ENCODE measurements at regions of chr17 and their contacts with region 1.

Region 1: DNA sequence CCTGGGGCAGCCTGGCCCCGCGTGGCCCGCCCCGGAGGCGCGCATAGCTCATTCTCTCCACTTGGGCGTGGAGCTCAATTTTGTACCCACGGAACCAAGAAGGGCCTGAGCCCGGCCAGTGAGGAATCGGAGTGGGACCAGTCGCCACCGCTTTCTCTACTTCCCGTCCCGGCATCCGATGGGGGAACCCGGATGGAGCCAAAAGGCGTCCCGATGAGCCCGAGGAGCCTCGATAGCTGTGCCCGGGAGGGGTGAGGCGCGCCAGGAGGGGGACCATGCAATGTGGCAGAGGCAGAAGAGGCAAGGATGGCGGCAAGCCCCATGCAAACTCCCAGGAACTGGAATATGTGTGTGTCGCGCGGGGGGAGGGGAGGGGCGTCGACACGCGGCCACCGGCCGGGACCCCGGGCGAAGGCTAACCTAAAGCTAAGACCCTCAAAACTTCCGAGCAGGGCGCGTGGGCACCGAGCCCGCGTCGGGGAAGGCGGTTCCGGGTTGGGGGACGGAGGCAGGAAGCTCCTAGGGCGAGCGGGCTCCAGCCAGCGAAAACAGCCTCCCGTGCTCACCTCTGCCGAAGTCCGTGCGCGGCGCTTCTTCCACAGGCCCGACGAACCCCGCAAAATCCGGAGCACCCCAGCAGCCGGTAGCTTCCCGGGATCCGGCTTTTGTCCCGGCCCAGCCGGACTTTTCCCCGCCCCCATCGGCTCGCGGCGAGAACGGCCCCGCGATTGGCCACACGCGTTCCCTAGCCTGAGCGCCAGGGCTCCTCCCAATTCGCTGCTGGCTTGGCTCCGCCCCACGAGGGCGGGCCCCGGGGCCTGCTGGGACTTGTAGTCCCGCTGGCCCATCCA is at the start of gene ACLY:
- DNase-seq: peak; percentile 96
- H3K4me3 Mint-ChIP-seq: peak within 1 kb of the TSS; percentile 94
- H3K27ac Mint-ChIP-seq: peak within 1 kb of the TSS; percentile 82
- H3K4me1 Mint-ChIP-seq: peaks cover 39% of the 10 kb centered on the region
- H3K27me3 Mint-ChIP-seq: no peaks in the 10 kb centered on the region
- total RNA-seq, gene ACLY: 153 to 161 TPM

Region 2: DNA sequence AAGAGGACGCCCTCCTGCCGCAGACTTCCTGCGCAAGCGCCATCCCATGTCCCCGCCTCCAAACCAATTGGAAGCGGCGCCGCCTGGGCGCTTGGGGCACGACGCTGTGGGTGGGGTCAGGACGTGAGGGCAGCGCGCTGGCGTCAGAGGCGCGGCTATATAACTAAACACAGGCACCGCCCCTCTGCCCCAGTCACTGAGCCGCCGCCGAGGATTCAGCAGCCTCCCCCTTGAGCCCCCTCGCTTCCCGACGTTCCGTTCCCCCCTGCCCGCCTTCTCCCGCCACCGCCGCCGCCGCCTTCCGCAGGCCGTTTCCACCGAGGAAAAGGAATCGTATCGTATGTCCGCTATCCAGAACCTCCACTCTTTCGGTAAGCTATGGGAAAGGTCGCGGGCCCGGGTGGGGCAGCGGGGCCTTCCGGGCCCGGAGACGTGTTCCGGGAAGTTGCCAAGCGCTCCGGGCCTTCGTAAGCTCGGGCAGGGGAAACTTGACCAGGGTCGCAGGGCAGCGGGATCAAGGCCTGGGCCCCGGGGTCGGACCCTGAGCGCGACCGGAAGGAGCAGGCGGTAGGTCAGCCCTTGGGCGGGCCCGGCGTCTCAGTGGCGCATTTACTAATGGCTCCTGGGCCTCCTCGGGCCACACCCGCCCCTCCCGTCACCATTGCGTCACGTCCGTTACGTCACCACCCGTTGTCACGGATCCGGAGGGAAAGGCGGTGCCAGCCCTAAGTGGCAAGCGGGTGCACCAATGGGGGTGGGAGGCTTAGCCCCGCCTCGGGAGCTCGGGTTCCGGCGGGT is 229.6 kb before region 1 on chr17 and contains the start of gene EIF1:
- CTCF ChIA-PET with region 1: no interaction called
- intact Hi-C with region 1: loop called (anchors 2 kb)
- DNase-seq: peak; percentile 100
- H3K4me3 Mint-ChIP-seq: peak within 1 kb of the TSS; percentile 97
- H3K27ac Mint-ChIP-seq: peak within 1 kb of the TSS; percentile 99
- H3K4me1 Mint-ChIP-seq: peaks cover 26% of the 10 kb centered on the region
- H3K27me3 Mint-ChIP-seq: no peaks in the 10 kb centered on the region
- total RNA-seq, gene EIF1: 1,206 to 1,253 TPM

Region 3: DNA sequence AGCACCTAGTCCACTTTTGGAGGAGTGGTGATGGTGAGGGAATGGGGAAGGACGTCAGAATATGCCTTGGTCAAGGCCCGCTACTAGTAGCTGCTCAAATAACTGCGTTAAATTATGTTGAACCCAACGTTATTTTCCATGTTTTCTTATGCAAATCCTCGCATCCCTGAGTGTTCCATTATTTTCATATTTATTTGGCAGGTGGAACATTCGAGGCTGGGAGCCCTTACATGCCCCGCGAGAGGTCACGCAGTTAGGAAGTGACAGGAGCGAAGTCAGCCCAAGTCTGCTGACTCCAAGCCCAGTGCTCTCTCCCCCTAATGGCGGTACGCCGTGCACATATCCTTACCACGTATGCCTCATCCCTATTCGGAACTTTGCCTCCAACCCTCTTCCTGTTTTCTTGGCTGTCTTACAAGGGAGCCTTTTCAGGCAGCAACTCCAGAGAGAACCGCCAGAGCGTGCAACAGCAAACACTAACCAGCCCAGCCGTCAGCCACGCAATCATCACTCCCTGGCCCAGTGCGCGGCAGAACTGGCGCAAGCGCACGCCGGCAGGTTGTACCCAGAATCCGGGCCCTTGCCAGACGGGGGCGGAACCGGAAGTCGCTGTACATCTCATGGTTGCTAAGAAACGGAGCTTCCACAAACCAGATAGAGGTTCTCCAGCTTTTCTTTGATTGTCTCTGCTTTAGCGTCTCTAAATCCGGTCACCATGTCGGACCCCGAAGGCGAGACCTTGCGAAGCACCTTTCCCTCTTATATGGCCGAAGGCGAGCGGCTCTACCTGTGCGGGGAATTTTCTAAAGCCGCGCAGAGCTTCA is 11.7 kb after region 1 on chr17 and contains the start of gene ODAD4:
- CTCF ChIA-PET with region 1: interaction called, 6 read pairs
- intact Hi-C with region 1: loop called (anchors 1 kb)
- DNase-seq: peak; percentile 97
- H3K4me3 Mint-ChIP-seq: peak within 1 kb of the TSS; percentile 97
- H3K27ac Mint-ChIP-seq: peak within 1 kb of the TSS; percentile 95
- H3K4me1 Mint-ChIP-seq: peaks cover 19% of the 10 kb centered on the region
- H3K27me3 Mint-ChIP-seq: no peaks in the 10 kb centered on the region
- total RNA-seq, gene ODAD4: 0.55 to 0.79 TPM

Region 4: GRCh38 chr17:41966463-41967140 is 48.1 kb after region 1 on chr17 and contains the start of gene CNP:
- CTCF ChIA-PET with region 1: interaction called, 4 read pairs
- intact Hi-C with region 1: loop called (anchors 2 kb)
- DNase-seq: peak; percentile 88
- H3K4me3 Mint-ChIP-seq: peak within 1 kb of the TSS; percentile 80
- H3K27ac Mint-ChIP-seq: peak within 1 kb of the TSS; percentile 86
- H3K4me1 Mint-ChIP-seq: peaks cover 38% of the 10 kb centered on the region
- H3K27me3 Mint-ChIP-seq: no peaks in the 10 kb centered on the region
- total RNA-seq, gene CNP: 58.4 to 59.1 TPM

Region 5: GRCh38 chr17:42153919-42154742 is 235.6 kb after region 1 on chr17:
- CTCF ChIA-PET with region 1: no interaction called
- intact Hi-C with region 1: loop called (anchors 1 kb)
- DNase-seq: no peak
- H3K4me3 Mint-ChIP-seq: peak overlapping the region; percentile 83
- H3K27ac Mint-ChIP-seq: peak overlapping the region; percentile 87
- H3K4me1 Mint-ChIP-seq: peaks cover 39% of the 10 kb centered on the region
- H3K27me3 Mint-ChIP-seq: no peaks in the 10 kb centered on the region